A673 (cell line): ENCODE measurements at regions of chr6 and their contacts with region 1.

Region 1: GRCh38 chr6:122995921-122996793 is at the start of gene CLVS2:
- DNase-seq: peak; percentile 95
- H3K4me3 ChIP-seq: peak within 1 kb of the TSS; percentile 86
- H3K27ac ChIP-seq: peak within 1 kb of the TSS; percentile 80
- H3K4me1 ChIP-seq: peaks cover 18% of the 10 kb centered on the region
- H3K27me3 ChIP-seq: no peaks in the 10 kb centered on the region
- CTCF ChIP-seq: no peak
- total RNA-seq, gene CLVS2: 84.9 and 89.6 TPM in 2 replicates

Region 2: GRCh38 chr6:122869437-122870024 is 126.6 kb before region 1 on chr6:
- CTCF ChIA-PET with region 1: interaction called, 4 read pairs
- POLR2A ChIA-PET with region 1: no interaction called
- intact Hi-C with region 1: loop called (anchors 2 kb)
- DNase-seq: peak; percentile 91
- H3K4me3 ChIP-seq: no peak overlapping the region
- H3K27ac ChIP-seq: peak overlapping the region; percentile 59
- H3K4me1 ChIP-seq: peaks cover 54% of the 10 kb centered on the region
- H3K27me3 ChIP-seq: no peaks in the 10 kb centered on the region
- CTCF ChIP-seq: peak; percentile 87

Region 3: GRCh38 chr6:122956376-122956775 is 39.8 kb before region 1 on chr6:
- CTCF ChIA-PET with region 1: interaction called, 13 read pairs
- POLR2A ChIA-PET with region 1: no interaction called
- intact Hi-C with region 1: no loop called
- DNase-seq: no peak
- H3K4me3 ChIP-seq: no peak overlapping the region
- H3K27ac ChIP-seq: no peak overlapping the region
- H3K4me1 ChIP-seq: no peaks in the 10 kb centered on the region
- H3K27me3 ChIP-seq: no peaks in the 10 kb centered on the region
- CTCF ChIP-seq: no peak

Region 4: GRCh38 chr6:123189816-123190215 is 193.7 kb after region 1 on chr6:
- CTCF ChIA-PET with region 1: no interaction called
- POLR2A ChIA-PET with region 1: no interaction called
- intact Hi-C with region 1: no loop called
- DNase-seq: no peak
- H3K4me3 ChIP-seq: no peak overlapping the region
- H3K27ac ChIP-seq: no peak overlapping the region
- H3K4me1 ChIP-seq: no peaks in the 10 kb centered on the region
- H3K27me3 ChIP-seq: no peaks in the 10 kb centered on the region
- CTCF ChIP-seq: no peak

Region 5: DNA sequence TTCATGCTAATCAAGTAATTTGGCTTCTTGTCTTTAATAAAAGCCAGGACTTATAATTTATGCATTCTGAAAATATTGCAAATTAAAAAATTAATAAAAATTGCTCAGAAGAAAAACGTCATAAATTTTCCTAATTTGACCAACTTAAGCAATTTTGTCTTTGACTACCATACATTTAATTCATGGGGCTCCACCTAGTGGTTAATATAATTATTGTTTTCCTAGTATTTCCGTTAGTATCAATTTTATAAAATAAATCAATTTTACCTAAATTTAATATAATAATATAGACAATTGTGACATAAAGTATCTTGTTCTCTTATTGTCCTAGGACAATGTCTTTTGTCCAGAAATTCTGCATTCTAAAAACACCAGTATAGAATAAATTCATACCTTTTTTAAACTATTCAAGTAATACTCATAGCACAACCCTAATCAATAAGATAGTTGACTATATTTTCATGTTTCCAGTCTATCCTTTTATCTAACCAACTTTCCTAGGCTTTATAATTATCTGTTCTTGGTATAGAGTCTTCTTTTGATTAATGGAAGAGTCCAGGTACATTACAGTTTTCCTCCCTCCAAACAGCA is 320.7 kb after region 1 on chr6:
- CTCF ChIA-PET with region 1: no interaction called
- POLR2A ChIA-PET with region 1: interaction called, 9 read pairs
- intact Hi-C with region 1: loop called (anchors 5 kb)
- DNase-seq: peak; percentile 62
- H3K4me3 ChIP-seq: no peak overlapping the region
- H3K27ac ChIP-seq: peak overlapping the region; percentile 23
- H3K4me1 ChIP-seq: peaks cover 7% of the 10 kb centered on the region
- H3K27me3 ChIP-seq: no peaks in the 10 kb centered on the region
- CTCF ChIP-seq: peak; percentile 72

Region 6: DNA sequence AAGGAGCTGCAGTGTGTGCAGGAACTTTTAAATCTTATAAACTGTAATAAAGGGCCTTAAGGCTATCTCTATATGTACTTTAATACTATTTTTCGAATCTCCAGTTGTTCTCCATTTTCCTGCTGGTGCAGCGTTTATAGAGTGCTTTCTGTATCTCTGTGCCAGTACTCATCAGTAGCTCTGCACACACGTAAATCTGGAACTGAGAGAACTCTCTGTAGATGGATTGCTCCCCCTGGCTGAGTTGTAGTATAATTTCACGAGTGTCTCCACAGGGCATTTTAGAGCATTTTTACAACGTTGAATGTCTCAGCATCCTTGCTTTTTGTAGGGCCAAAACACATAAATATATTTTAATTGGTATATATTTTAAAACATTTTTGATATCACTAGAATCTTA is 384.1 kb after region 1 on chr6:
- CTCF ChIA-PET with region 1: no interaction called
- POLR2A ChIA-PET with region 1: no interaction called
- intact Hi-C with region 1: loop called (anchors 5 kb)
- DNase-seq: peak; percentile 94
- H3K4me3 ChIP-seq: peak overlapping the region; percentile 20
- H3K27ac ChIP-seq: peak overlapping the region; percentile 67
- H3K4me1 ChIP-seq: peaks cover 40% of the 10 kb centered on the region
- H3K27me3 ChIP-seq: no peaks in the 10 kb centered on the region
- CTCF ChIP-seq: peak; percentile 76

Region 7: DNA sequence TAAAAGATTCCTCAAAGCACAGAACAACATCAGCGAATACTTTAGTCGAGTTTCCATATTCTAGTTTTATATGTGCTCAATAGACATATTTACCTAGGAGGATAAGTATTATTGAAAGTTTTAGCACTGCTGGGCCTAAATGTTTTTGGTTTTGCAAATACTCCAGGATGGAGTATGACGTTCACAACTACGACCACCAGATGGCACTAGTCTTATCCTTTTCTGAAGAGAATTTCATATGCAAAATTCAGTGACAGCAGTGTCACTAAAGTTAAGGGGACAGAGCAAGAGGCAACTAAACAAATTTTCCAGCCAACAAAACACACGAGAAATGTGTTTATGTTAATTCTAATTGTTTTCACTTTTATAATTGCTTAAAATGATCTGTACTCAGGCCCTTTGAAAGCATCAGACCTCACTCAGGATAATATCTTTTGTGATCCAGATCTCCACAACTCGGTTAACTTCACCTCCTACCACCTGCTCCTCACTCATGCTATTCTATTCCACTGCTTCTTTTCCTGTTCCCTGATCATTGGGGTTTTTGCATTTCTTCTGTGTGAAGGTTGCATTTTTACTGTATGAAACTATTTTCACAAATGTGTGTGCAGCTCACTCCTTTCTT is 419.8 kb after region 1 on chr6:
- CTCF ChIA-PET with region 1: no interaction called
- POLR2A ChIA-PET with region 1: no interaction called
- intact Hi-C with region 1: no loop called
- DNase-seq: peak; percentile 82
- H3K4me3 ChIP-seq: no peak overlapping the region
- H3K27ac ChIP-seq: peak overlapping the region; percentile 39
- H3K4me1 ChIP-seq: peaks cover 3% of the 10 kb centered on the region
- H3K27me3 ChIP-seq: no peaks in the 10 kb centered on the region
- CTCF ChIP-seq: peak; percentile 80

Region 8: DNA sequence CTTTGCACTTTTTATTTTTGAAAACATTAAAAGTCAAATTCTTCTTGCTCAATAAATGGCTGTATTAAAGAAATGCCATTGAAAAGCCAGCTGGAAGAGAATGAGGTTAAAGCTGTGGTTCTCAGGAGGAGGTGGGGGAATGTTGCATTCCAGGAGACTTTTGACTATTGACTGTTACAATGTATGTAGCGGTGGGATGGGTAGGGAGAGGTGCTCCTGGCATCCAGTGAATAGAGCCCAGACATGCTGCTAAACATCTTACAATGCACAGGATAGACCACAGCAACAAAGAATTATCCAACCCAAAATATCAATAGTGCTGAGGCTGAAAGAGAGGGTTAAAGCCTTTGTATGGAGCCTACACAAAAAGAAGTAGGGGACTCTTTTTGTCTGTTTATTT is 1103.4 kb after region 1 on chr6:
- CTCF ChIA-PET with region 1: no interaction called
- POLR2A ChIA-PET with region 1: no interaction called
- intact Hi-C with region 1: no loop called
- DNase-seq: no peak
- H3K4me3 ChIP-seq: no peak overlapping the region
- H3K27ac ChIP-seq: no peak overlapping the region
- H3K4me1 ChIP-seq: no peaks in the 10 kb centered on the region
- H3K27me3 ChIP-seq: peaks cover 5% of the 10 kb centered on the region
- CTCF ChIP-seq: no peak

Region 9: GRCh38 chr6:124599658-124600057 is 1603.5 kb after region 1 on chr6:
- CTCF ChIA-PET with region 1: no interaction called
- POLR2A ChIA-PET with region 1: no interaction called
- intact Hi-C with region 1: no loop called
- DNase-seq: no peak
- H3K4me3 ChIP-seq: no peak overlapping the region
- H3K27ac ChIP-seq: no peak overlapping the region
- H3K4me1 ChIP-seq: no peaks in the 10 kb centered on the region
- H3K27me3 ChIP-seq: no peaks in the 10 kb centered on the region
- CTCF ChIP-seq: no peak